ENCODE measurements at regions of chr6 and their contacts with region 1.

Region 1: DNA sequence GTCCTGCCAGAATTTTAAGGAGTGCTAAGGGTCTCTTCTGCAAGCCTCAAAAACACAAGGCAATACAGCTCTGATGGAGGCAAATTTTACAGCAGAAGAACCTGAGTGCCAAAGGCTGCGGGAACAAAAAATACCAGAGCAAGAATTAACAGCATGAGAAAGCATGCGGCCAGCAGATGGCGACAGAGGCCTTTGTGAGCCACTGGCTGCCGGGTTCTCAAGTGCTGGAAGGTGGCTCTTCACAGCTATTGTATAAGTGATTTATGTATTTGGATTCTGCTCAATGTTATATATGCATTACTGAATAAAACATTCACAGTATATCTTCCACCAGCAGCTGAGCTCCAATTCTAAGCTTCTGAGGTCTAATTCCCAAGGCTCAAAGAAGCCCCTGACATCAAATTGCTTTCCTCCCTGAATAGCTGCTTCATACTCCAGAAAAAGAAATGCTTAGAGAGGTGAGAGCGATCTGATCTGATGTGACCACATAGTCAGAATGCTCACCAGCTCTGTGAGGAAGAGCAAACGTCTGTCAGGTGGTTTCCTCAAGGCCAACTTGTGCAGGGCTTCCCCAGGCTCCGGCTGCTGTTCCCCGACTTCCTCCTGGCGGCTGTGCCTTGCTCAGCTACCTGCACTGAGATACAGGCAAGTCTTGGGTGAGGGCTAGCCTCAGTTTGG is 58.6 kb downstream of the PPP1R3G start:
- H3K4me3 ChIP-seq: no peak overlapping the region
- H3K27ac ChIP-seq: no peak overlapping the region
- H3K4me1 ChIP-seq: peaks cover 4% of the 10 kb centered on the region; the same call in 1 of the 2 replicates
- CTCF ChIP-seq: peak; percentile 66

Region 2: GRCh38 chr6:5125152-5126006 is 18.4 kb before region 1 on chr6:
- CTCF ChIA-PET with region 1: interaction called, 16 read pairs
- POLR2A ChIA-PET with region 1: no interaction called
- H3K4me3 ChIP-seq: no peak overlapping the region
- H3K27ac ChIP-seq: no peak overlapping the region
- H3K4me1 ChIP-seq: no peaks in the 10 kb centered on the region
- CTCF ChIP-seq: no peak

Region 3: GRCh38 chr6:5162355-5162754 is 18.6 kb after region 1 on chr6:
- CTCF ChIA-PET with region 1: interaction called, 22 read pairs
- POLR2A ChIA-PET with region 1: interaction called, 4 read pairs
- H3K4me3 ChIP-seq: no peak overlapping the region
- H3K27ac ChIP-seq: no peak overlapping the region
- H3K4me1 ChIP-seq: peaks cover 2% of the 10 kb centered on the region; the same call in 1 of the 2 replicates
- CTCF ChIP-seq: no peak

Region 4: GRCh38 chr6:5174244-5174643 is 30.5 kb after region 1 on chr6:
- CTCF ChIA-PET with region 1: interaction called, 41 read pairs
- POLR2A ChIA-PET with region 1: no interaction called
- H3K4me3 ChIP-seq: no peak overlapping the region
- H3K27ac ChIP-seq: no peak overlapping the region
- H3K4me1 ChIP-seq: no peaks in the 10 kb centered on the region
- CTCF ChIP-seq: no peak

Region 5: GRCh38 chr6:5203546-5203945 is 59.8 kb after region 1 on chr6:
- CTCF ChIA-PET with region 1: interaction called, 11 read pairs
- POLR2A ChIA-PET with region 1: no interaction called
- H3K4me3 ChIP-seq: no peak overlapping the region
- H3K27ac ChIP-seq: no peak overlapping the region
- H3K4me1 ChIP-seq: peaks cover 15% of the 10 kb centered on the region
- CTCF ChIP-seq: no peak

Region 6: GRCh38 chr6:5302995-5303622 is 159.3 kb after region 1 on chr6:
- CTCF ChIA-PET with region 1: interaction called, 30 read pairs
- POLR2A ChIA-PET with region 1: no interaction called
- H3K4me3 ChIP-seq: no peak overlapping the region
- H3K27ac ChIP-seq: no peak overlapping the region
- H3K4me1 ChIP-seq: peaks cover 17% of the 10 kb centered on the region
- CTCF ChIP-seq: peak; percentile 76; the same call in 1 of the 2 replicates

Region 7: DNA sequence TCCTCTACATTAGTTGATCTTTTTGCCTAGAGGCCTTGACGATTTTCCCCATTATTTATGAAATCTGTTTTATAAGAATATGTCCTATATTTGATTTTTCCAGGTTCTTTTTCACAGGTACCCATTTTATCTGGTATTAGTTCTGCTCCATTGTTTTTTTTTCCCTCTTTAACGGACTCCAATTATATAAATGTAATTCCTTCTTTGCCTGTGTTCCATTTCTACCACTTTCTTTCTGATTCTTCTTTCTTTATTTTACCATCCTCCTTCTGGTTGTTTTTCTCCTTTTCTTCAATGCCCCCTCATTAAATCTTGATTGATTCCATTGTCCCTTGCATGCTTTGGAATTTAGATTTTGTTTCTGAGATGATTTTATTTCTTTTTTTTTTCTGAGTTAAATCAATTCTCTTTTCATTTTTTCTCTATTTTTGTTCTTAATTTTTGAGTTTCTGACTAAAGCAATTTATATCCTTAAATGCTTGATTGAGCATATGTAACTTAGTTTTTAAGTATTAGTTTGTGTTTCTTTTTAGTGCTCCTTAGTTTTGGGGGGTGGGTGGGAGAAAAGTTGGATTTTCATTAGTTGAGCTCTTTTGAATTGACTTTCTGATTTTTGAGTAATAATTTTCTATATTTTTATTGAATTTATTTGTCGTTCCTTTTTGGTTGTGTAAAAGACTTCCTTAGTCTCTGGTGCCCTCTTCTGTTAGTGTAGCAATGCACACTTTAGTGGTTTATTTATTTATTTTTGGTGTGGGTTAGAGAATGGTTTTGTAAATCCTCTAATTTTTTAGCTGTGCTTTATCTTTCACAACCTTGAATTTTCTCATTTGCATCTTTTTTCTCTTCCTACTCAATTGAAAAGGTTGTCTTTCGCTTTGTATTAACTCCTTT is 258.3 kb after region 1 on chr6:
- CTCF ChIA-PET with region 1: interaction called, 28 read pairs
- POLR2A ChIA-PET with region 1: no interaction called
- H3K4me3 ChIP-seq: no peak overlapping the region
- H3K27ac ChIP-seq: no peak overlapping the region
- H3K4me1 ChIP-seq: no peaks in the 10 kb centered on the region
- CTCF ChIP-seq: 0 out of 2 replicates have a peak, but pooled peaks have one; percentile 23

Measured in HEK293 (cell line).